ENCODE measurements at regions of chr1 and their contacts with region 1.

Region 1: DNA sequence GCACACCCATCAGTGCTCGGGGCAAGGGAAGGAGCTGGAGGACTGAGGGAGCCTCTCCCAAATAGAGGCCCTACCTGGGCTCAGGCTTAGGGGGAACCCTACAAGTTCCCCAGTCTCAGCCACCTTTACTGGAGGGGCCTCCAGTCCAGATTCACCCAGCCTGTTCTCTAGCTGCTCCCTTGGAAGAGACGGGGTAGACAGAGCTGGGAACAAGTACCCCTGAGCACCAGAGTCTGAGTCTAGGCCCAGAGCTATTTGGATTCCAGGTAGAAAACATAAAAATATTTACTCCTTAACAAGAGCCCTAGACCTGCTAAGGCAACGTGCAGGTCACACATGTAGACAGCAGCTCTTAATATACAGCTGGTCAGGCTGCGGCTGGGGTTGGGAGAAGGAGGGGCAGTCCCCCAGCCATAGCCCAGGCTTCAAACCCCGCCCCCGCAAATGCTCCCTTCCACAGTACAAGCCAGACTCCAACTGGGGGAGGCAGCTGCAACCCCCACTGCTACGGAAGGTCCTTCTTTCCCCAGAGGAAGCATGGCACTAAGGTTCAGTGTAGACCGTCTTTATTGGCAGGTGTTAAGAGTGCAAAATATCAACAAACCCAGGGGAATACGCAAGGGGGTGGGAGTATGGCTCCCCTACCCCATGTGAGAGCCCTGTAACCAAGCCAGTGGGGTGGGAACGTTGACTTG is 8.0 kb downstream of the TENT5B start:
- DNase-seq: no peak

Region 2: DNA sequence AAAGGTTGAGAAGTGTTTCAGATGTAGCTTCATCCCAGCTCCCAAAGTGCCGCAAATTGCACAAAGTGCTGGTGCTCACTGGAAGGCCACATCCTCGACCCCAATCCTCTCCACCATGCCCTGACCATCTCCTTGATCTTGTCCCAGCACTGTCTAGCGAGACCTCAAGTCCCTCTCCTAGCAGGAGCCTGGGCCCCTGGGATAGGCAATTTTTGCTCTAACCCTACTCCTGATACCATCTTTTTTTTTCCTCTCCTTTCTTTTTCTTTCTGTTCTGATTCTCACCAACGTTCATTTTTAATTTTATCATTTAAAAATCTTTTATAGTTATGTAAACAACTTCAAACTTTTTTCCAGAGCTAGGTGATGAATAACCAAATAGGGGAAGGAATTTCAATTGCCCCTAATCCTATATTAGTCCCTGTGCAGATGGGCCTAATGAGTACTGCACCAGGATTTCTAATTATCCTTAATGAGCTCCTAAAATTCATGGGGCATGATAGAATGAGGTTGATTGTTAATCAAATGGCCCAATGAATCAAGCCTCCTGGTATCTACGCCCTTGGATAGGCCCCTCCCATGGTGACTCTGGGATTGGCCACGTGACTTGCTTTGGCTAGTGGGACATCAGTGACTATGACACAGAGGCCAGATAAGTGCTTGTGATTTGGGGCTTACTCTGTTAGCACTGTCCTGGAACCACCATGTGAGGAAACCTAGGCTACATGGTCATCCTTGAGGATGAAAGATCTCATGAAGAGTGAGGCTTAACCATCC is 49.5 kb after region 1 on chr1:
- intact Hi-C with region 1: loop called in 1 of 2 experiments (anchors 1 kb)
- DNase-seq: no peak

Region 3: DNA sequence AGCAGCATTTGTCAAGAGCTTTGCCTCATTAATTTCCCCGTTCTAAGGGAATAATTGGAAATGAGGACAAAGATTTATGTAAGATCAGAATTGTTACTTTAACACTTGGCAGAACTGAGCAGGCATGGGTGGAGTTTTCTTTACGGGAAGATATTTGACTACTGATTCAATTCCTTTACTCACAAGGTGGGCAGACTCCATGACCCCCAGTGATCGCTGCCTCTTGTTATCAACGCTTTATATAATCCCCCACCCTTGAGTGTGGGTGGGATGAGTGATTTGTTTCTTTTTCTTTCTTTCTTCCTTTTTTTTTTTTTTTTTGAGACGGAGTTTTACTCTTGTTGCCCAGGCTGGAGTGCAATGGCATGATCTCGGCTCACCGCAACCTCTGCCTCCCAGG is 73.3 kb after region 1 on chr1:
- intact Hi-C with region 1: no loop called
- DNase-seq: no peak

Region 4: GRCh38 chr1:28877132-28877781 is 1872.6 kb after region 1 on chr1:
- intact Hi-C with region 1: no loop called
- DNase-seq: peak; percentile 89

Measured in posterior vena cava (tissue), 2 donors.